Gastrocnemius medialis (tissue), 4 donors: ENCODE measurements at regions of chr1 and their contacts with region 1.

Region 1: GRCh38 chr1:2133039-2133878 is 61.3 kb downstream of the FAAP20 start:
- DNase-seq: peak; percentile 85 to 88
- ATAC-seq: peak; percentile 81 to 88
- H3K4me3 ChIP-seq: peak overlapping the region; percentile 38 to 52 (median 46)
- H3K27ac ChIP-seq: peak overlapping the region; percentile 70 to 77 (median 73)
- H3K4me1 ChIP-seq: peaks cover 0 to 13% of the 10 kb centered on the region in 2 donors
- H3K27me3 ChIP-seq: peaks cover 28 to 52% (median 32%) of the 10 kb centered on the region in 3 donors
- CTCF ChIP-seq: no peak
- POLR2A ChIP-seq: peak; percentile 31 to 53

Region 2: DNA sequence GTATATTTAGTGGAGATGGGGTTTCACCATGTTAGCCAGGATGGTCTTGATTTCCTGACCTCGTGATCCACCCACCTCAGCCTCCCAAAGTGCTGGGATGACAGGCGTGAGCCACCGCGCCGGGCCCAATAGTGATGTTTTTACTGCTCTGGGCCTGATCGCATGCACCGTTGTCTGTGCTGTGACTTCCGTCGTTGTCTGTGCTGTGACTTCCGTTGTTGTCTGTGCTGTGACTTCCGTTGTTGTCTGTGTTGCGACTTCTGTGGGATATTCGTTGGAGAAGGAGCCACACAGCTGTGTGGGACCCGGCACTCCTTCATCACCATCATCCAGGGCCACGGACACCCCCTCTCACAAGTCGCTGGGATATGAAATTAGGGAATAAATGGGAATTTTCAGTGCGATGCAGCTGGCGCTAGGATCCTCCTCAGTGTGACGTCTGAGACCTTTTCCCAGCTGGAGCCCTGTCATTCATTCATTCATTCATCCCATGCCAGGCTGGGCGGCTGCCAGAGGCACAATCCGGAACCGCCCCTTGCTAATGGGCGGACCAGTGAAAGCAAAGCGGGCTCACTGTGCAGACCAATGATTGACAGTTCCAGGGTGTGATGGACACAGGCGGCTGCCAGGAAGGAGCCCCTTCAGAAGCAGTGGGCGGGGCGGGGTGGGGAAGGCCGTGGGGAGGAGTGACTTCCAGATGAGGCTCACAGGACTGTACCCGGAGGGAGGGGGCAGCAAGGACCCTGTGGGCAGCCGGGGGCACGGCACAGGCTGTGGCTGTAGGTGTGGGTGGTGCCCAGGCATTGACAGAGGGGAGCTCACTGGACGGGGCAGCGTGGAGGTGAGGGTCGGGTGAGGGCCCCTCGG is 34.2 kb before region 1 on chr1:
- in situ Hi-C with region 1: no loop called
- intact Hi-C with region 1: no loop called
- DNase-seq: no peak
- ATAC-seq: no peak
- H3K4me3 ChIP-seq: no peak overlapping the region
- H3K27ac ChIP-seq: no peak overlapping the region
- H3K4me1 ChIP-seq: no peaks in the 10 kb centered on the region
- H3K27me3 ChIP-seq: peaks cover 14 to 29% (median 15%) of the 10 kb centered on the region in 3 donors
- CTCF ChIP-seq: no peak
- POLR2A ChIP-seq: no peak

Region 3: DNA sequence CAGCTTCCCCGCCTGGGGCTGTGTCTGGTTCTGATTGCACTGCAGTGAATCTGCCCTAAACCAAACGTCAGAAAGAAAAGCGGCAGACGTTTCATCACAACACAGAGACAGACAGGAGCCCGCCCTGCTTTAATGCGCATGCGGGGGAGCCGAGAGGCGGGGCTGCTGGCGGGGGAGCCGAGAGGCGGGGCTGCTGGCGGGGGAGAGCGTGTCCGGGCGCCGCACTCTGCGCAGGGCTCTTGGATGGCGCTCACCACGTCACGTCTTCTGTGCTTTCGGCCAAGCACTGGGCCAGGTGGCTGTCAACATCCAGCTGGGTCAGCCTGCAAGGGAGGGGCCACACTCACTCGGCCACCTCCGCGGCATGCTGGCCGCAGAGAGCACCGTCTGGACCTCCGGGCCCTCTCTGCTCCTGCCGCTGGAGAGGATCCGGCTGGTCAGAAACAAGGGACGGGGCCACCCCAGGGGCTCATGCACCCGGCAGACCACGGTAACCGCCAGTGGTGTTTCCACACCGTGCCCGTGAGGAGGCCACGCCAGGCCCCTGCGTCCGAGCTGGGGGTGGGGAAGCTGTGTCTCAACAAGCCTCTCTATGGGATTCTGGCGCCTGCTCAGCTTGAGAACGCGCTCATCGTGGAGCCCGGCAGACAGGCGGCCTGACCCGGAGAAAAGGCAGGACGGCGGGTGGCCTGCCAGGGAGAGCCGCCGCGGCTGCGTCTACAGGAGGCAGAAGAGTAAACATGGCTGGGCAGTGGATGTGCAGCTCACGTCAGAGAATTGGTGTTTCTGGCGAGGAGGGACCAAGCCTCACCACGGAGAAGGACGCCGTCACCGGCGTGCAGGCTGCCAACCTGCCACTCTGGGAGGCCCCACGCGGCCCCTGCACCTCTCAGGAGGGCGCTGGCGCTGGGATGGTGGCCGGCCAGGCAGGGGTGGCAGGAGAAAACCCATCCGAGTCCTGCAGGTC is 56.5 kb after region 1 on chr1:
- in situ Hi-C with region 1: no loop called
- intact Hi-C with region 1: loop called (anchors 1 kb)
- DNase-seq: peak; percentile 96 to 97
- ATAC-seq: peak; percentile 93 to 94
- H3K4me3 ChIP-seq: peak overlapping the region; percentile 72 to 88 (median 72)
- H3K27ac ChIP-seq: peak overlapping the region; percentile 97 to 100 (median 98)
- H3K4me1 ChIP-seq: peaks cover 21 to 39% of the 10 kb centered on the region in 2 donors
- H3K27me3 ChIP-seq: no peaks in the 10 kb centered on the region
- CTCF ChIP-seq: peak in 1 of 5 experiments; percentile 18
- POLR2A ChIP-seq: peak; percentile 94 to 96

Region 4: GRCh38 chr1:2381741-2382620 is 248.7 kb after region 1 on chr1:
- in situ Hi-C with region 1: no loop called
- intact Hi-C with region 1: loop called (anchors 5 kb)
- DNase-seq: peak; percentile 41 to 67
- ATAC-seq: peak; percentile 64 to 81
- H3K4me3 ChIP-seq: no peak overlapping the region
- H3K27ac ChIP-seq: no peak overlapping the region
- H3K4me1 ChIP-seq: peaks cover 0 to 5% of the 10 kb centered on the region in 2 donors
- H3K27me3 ChIP-seq: no peaks in the 10 kb centered on the region
- CTCF ChIP-seq: peak; percentile 72 to 92 (median 88)
- POLR2A ChIP-seq: no peak